ENCODE measurements at regions of chr3 and their contacts with region 1.

Region 1: DNA sequence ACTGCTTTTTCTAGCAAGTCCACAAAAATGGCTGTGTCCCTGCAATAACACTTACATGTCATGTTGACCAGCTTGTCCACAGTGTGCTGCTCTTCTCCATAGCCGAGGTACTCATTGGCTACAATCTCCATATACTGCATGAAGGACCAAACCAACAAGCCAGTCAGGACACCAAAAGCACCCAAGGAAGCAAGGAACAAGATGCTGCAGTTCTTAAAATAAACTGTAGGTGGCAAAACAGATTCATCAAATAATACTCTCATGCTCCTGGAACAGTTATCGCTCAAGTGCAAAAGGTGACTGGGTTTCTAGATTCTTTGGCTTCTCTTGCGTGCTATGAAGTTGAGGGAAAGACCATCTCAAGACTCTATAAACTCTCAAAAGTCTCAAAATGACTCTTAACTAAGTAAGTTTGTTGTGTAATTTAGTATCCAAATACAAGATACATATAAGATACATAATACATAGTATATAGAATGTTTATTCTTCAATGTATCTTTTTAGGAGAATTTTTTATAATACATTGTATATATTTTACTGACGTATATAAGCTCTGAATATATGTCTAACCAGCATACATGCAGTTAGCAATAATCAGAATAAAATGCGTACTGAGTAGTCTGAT is 57.0 kb downstream of the NEK10 start:
- DNase-seq: no peak
- ATAC-seq: peak in 5 of 8 donors; percentile 47 to 82 (median 64)
- H3K4me3 ChIP-seq: no peak overlapping the region
- H3K27ac ChIP-seq: no peak overlapping the region
- H3K4me1 ChIP-seq: no peaks in the 10 kb centered on the region
- H3K27me3 ChIP-seq: no peaks in the 10 kb centered on the region
- CTCF ChIP-seq: peak; percentile 71 to 87 (median 81)

Region 2: GRCh38 chr3:27289769-27290413 is 22.3 kb before region 1 on chr3:
- intact Hi-C with region 1: no loop called
- DNase-seq: no peak
- ATAC-seq: no peak
- H3K4me3 ChIP-seq: no peak overlapping the region
- H3K27ac ChIP-seq: no peak overlapping the region
- H3K4me1 ChIP-seq: peaks cover 0 to 5% (median 0%) of the 10 kb centered on the region in 9 donors
- H3K27me3 ChIP-seq: no peaks in the 10 kb centered on the region
- CTCF ChIP-seq: no peak

Region 3: DNA sequence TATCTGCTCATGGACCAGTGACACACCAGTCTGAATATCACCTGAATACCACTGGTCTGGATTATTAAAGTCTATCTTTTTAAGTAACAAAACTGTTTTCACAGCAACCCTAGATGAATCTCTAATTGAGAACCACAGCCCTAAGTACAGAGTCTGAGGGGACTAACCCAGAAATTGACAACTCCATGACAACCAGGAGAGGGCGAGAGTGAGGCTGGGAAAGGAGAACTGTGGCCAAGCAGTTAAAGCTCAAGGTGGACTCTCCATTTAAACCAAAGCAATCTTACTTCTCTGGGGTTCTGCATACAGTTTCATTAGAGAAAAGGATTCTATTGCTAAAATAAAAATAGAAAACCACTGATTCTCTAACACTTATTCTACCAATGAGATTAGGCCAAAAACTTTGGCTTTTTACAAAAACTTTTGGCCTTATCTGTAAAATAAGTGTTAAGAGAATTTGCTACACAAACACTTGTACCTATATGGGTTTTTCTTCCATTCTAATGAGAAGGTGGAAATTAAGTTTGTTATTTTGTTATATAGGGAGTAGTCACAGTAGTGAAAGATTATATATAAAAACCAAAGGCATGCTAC is 45.6 kb after region 1 on chr3:
- intact Hi-C with region 1: loop called in 2 of 10 experiments (anchors 5 to 10 kb)
- DNase-seq: peak in 1 of 2 donors; percentile 32
- ATAC-seq: peak in 4 of 8 donors; percentile 51 to 74 (median 62)
- H3K4me3 ChIP-seq: no peak overlapping the region
- H3K27ac ChIP-seq: no peak overlapping the region
- H3K4me1 ChIP-seq: peaks cover 0 to 32% (median 0%) of the 10 kb centered on the region in 9 donors
- H3K27me3 ChIP-seq: no peaks in the 10 kb centered on the region
- CTCF ChIP-seq: peak in 7 of 9 donors; percentile 44 to 67 (median 55)

Region 4: GRCh38 chr3:27462228-27462627 is 150.1 kb after region 1 on chr3:
- intact Hi-C with region 1: loop called (anchors 1 to 10 kb)
- DNase-seq: no peak
- ATAC-seq: no peak
- H3K4me3 ChIP-seq: no peak overlapping the region
- H3K27ac ChIP-seq: no peak overlapping the region
- H3K4me1 ChIP-seq: peaks cover 0 to 13% (median 0%) of the 10 kb centered on the region in 9 donors
- H3K27me3 ChIP-seq: no peaks in the 10 kb centered on the region
- CTCF ChIP-seq: no peak

Region 5: GRCh38 chr3:27659279-27660021 is 347.3 kb after region 1 on chr3:
- intact Hi-C with region 1: loop called in 1 of 10 experiments (anchors 2 kb)
- DNase-seq: peak; percentile 38 to 62
- ATAC-seq: peak in 5 of 8 donors; percentile 33 to 71 (median 66)
- H3K4me3 ChIP-seq: no peak overlapping the region
- H3K27ac ChIP-seq: no peak overlapping the region
- H3K4me1 ChIP-seq: no peaks in the 10 kb centered on the region
- H3K27me3 ChIP-seq: no peaks in the 10 kb centered on the region
- CTCF ChIP-seq: peak; percentile 67 to 84 (median 79)

Region 6: DNA sequence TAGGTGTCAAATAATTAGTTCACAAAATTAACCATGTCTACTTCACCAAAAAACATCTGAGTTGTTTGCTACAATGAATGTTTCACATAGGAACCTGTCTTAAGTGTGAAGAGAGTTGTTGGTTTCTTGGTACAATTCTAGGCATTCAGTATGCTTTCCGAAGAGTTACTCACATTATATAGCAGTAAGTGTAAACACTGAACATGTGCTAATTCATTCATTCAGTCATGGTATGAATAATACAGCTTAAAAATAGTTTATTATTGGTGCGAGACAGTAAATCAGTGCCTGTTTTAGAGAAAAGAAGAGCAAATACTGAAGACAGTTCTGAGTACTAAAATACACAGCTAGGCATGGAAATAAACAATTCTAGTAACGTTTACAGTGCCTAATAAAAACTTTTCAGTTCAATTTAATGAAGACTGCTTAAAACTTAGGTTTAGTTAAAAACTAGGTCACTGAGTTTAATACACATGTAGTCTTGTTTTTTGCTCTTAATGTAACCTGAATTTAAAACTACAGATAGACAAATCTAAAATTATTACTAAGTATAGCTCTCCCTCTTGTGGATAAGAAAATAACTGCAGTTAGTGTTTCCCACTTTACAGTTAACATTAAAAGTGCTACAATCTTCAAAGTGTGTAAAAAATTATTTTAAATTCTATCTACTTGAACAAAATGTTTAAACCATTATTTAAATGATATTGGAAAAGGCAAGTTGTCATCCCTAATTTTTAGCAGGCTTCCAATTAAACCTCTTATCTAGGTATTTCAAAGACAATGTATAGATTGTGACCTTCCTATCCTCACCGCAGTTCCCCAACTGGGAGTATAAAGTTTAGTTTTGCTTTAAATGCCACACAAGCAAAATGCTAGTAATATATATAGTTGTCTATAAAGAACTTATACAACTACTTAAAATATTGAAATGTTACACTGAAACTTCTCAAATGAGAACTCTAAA is 1016.3 kb after region 1 on chr3:
- intact Hi-C with region 1: loop called in 1 of 10 experiments (anchors 10 kb)
- DNase-seq: no peak
- ATAC-seq: peak in 2 of 8 donors; percentile 29 to 52
- H3K4me3 ChIP-seq: no peak overlapping the region
- H3K27ac ChIP-seq: no peak overlapping the region
- H3K4me1 ChIP-seq: peaks cover 0 to 9% (median 0%) of the 10 kb centered on the region in 9 donors
- H3K27me3 ChIP-seq: no peaks in the 10 kb centered on the region
- CTCF ChIP-seq: peak; percentile 51 to 86 (median 77)